ENCODE measurements at regions of chr6 and their contacts with region 1.

Region 1: GRCh38 chr6:79453558-79454042 is 83.6 kb downstream of the LCA5 start:
- DNase-seq: no peak
- ATAC-seq: no peak; the same call in 1 of the 2 replicates
- H3K4me3 ChIP-seq: no peak overlapping the region
- H3K27ac ChIP-seq: no peak overlapping the region
- H3K4me1 ChIP-seq: no peaks in the 10 kb centered on the region
- H3K27me3 ChIP-seq: no peaks in the 10 kb centered on the region; the same call in none of the 2 replicates
- CTCF ChIP-seq: no peak
- POLR2A ChIP-seq: no peak
- RAD21 ChIP-seq: no peak

Region 2: DNA sequence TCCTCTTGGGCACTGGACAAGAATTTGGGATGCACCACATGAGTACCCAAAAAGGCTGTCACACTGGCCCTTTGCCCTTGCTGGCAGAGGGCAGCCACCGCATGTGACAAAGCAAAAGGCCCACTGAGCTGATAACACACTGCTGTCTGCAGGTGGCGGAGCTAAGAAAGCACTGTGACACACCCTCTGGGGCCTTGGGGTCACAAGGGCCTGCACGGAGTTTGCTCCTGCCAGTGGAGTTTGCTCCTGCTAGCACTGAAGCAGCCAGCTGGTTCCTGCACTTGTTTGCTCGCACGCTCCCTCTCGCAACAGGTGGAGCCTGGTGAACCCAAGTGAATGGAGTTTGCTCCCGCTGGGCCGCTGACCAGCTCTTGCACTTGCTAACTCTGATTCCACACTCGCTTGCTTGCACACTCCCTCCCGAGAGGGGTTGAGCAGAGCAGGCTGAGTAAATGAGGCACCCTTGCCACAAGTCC is 48.9 kb before region 1 on chr6:
- CTCF ChIA-PET with region 1: interaction called, 3 read pairs
- POLR2A ChIA-PET with region 1: no interaction called
- dilution Hi-C with region 1: no loop called
- in situ Hi-C with region 1: no loop called
- intact Hi-C with region 1: loop called (anchors 2 kb)
- DNase-seq: no peak
- ATAC-seq: no peak
- H3K4me3 ChIP-seq: no peak overlapping the region
- H3K27ac ChIP-seq: no peak overlapping the region
- H3K4me1 ChIP-seq: no peaks in the 10 kb centered on the region
- H3K27me3 ChIP-seq: no peaks in the 10 kb centered on the region; the same call in 1 of the 2 replicates
- CTCF ChIP-seq: no peak
- POLR2A ChIP-seq: no peak
- RAD21 ChIP-seq: no peak

Region 3: GRCh38 chr6:79431537-79431933 is 22.1 kb before region 1 on chr6:
- CTCF ChIA-PET with region 1: no interaction called
- POLR2A ChIA-PET with region 1: no interaction called
- dilution Hi-C with region 1: no loop called
- in situ Hi-C with region 1: no loop called
- intact Hi-C with region 1: no loop called
- DNase-seq: no peak
- ATAC-seq: no peak
- H3K4me3 ChIP-seq: no peak overlapping the region
- H3K27ac ChIP-seq: no peak overlapping the region
- H3K4me1 ChIP-seq: no peaks in the 10 kb centered on the region
- H3K27me3 ChIP-seq: peaks cover 2% of the 10 kb centered on the region
- CTCF ChIP-seq: no peak
- POLR2A ChIP-seq: no peak
- RAD21 ChIP-seq: no peak